ENCODE measurements at regions of chr3 and their contacts with region 1.

Region 1: DNA sequence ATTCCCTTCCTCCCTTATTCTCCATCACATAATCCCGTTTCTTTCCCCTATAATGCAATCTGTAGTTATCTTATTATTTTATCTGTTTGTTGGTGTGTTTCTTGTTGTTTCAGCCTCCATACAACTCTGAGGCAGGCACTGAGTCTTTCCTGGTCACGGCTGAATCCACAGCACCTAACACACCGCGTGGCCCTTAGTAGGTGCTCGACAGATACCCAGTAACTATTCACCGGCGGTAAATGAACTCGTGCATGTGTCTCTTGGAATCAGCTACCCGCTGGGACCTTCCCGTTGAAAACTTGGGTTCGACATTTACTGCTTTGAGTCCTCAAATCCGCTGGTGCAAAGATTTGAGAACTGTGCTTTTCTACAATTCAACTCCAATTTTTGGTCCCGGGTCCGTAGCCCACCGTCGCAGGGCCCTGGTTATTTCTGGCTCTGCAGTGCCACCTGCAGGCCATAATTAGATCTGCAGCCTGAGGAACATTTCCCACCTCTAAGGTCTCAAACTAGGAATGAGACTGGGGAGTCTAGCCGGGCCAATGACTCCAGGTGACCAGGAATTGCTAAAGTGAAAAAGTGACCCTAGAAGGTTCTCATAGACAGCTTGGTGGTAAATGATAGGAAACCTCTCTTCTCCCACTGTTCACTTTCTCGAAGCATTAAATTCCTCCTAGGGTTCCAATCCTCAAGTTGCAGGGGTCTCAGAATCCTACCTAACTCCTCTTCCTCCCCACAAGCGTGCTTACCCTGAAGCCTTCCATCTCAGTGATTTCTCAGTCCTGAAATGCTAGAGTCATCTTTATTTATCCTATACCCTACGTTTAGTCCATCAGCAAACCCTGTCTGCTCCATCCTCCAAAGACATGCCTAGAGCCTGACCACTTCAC is 40.0 kb upstream of the TRH start:
- DNase-seq: peak; percentile 41
- H3K4me3 Mint-ChIP-seq: no peak overlapping the region
- H3K27ac Mint-ChIP-seq: no peak overlapping the region
- H3K4me1 Mint-ChIP-seq: peaks cover 8% of the 10 kb centered on the region
- H3K27me3 Mint-ChIP-seq: peaks cover 4% of the 10 kb centered on the region

Region 2: DNA sequence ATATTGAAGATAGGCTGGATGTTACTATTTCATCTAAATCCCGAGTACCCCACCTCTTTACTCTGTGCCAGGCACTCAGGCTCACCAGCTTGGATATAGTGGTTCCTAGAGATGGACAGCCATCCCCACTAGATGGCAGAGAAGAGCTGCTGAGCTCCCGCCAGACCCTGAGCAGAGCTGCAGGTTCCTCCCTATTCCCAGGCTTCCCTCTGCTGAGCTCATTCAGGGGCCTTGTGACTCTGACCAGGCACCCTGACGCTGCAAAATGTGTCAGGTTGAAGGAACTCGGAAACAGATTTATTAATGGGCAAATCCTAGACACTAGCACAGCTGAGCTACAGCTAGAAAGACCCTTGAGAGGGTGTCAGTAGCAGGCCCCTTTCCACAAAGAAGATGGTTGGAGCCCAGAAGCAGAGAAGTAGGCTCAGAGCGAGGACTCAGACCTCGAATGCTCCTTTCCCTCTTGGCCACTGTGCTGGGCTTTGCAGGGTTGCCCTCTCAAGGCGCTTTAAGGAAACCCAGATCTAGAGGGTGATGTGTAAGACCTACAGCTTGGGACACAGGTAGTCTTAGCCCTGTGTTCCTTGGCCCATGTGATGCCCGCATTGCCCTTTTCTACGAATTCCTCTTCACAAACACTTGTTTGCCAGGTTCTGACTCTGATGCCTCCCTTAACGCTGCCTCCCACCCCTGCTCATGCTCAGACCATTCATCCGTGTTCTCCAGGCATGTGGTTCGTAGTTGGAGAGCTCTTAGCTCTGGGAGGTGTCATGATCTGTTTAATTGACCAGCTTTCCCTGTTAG is 444.0 kb before region 1 on chr3:
- CTCF ChIA-PET with region 1: interaction called, 12 read pairs
- DNase-seq: peak; percentile 69
- H3K4me3 Mint-ChIP-seq: no peak overlapping the region
- H3K27ac Mint-ChIP-seq: no peak overlapping the region
- H3K4me1 Mint-ChIP-seq: no peaks in the 10 kb centered on the region
- H3K27me3 Mint-ChIP-seq: no peaks in the 10 kb centered on the region

Region 3: DNA sequence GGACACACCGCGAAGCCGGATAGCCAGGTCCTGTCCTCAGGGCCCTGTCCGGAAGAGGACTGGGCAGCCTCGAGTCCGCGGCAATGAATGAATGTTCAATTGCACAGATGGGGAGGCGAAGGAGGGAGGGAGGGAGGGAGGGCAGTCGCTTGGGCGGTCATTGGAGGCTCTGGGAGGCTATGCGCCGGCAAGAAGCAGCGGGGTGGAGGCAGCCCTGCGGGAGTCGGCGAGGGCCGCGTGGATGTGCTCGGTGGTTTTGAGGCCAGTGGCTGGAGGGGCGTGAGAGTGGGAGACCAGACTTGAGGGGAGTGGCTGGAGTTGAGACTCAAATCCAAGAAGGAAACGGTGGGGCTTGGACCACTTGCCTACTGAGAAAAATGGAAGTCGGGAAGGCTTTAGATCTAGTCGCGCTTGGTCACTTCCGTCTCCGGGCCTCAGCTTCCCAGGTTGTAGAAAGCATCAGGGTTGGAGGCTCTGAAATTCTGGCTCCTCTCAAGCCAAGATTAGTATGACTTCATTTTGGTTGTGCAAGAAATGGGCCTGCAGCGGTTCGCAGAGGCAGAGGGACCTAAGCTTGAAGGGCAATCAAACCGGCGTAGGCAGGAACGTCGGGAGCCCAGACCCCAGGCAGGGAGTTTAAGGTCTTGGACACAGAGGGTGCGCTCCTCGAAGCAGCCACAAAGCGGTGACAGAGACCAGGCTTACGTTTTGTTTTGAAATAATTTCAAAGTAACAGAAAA is 306.9 kb before region 1 on chr3:
- CTCF ChIA-PET with region 1: interaction called, 16 read pairs
- DNase-seq: peak; percentile 76
- H3K4me3 Mint-ChIP-seq: peak overlapping the region; percentile 71
- H3K27ac Mint-ChIP-seq: no peak overlapping the region
- H3K4me1 Mint-ChIP-seq: peaks cover 22% of the 10 kb centered on the region
- H3K27me3 Mint-ChIP-seq: peaks cover 58% of the 10 kb centered on the region

Measured in activated naive CD4-positive, alpha-beta T cell treated with anti-CD3 and anti-CD28 coated beads, Interleukin-2, amount 10 ng/mL, durations not matched to agents 7 days and 5 days (primary cell).